Activated CD4-positive, alpha-beta T cell treated with anti-CD3 and anti-CD28 coated beads for 36 hours (primary cell): ENCODE measurements at regions of chr4 and their contacts with region 1.

Region 1: GRCh38 chr4:154551872-154552686 is 1.9 kb upstream of the PLRG1 start:
- DNase-seq: peak; percentile 81
- ATAC-seq: peak; percentile 47
- H3K4me3 Mint-ChIP-seq: no peak overlapping the region
- H3K27ac Mint-ChIP-seq: no peak overlapping the region
- H3K4me1 Mint-ChIP-seq: peaks cover 20% of the 10 kb centered on the region
- H3K27me3 Mint-ChIP-seq: peaks cover 2% of the 10 kb centered on the region

Region 2: GRCh38 chr4:154254999-154255398 is 297.1 kb before region 1 on chr4:
- CTCF ChIA-PET with region 1: no interaction called
- POLR2A ChIA-PET with region 1: no interaction called
- intact Hi-C with region 1: no loop called
- DNase-seq: no peak
- ATAC-seq: no peak
- H3K4me3 Mint-ChIP-seq: no peak overlapping the region
- H3K27ac Mint-ChIP-seq: no peak overlapping the region
- H3K4me1 Mint-ChIP-seq: no peaks in the 10 kb centered on the region
- H3K27me3 Mint-ChIP-seq: peaks cover 18% of the 10 kb centered on the region

Region 3: DNA sequence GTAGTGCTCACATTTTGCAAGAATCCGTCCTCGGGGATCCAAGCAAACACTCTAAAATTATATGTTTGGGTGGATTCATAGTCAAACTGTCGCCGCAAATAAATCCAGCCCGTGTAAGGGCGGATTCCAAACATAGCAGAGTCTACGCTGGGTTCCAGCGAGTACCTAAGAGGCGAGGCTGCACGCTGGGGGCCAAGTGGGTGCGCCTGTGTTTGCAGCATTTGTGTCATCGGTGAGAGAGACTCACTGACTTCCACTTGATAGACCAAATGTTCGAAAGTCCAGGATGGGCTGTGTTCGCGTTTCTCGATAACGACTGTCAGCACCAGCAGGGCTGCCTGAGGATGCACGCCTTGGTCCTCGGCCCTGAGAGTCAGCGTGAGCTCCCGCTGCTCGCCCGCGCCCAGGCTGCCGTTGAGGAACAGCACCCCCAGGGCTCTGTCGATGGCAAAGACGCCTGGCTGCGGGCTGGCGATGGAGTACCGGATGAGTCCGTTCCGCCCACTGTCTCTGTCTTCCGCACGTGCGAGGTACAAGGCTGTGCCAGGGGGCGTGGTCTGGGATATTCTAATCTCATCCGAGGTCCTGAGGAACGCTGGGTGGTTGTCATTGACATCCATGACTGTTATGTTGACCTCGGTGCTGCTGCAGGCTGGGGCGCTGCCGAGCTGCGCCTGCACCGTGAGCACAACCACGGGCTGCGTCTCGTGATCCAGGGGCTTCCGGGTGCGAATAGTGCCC is 219.2 kb before region 1 on chr4:
- CTCF ChIA-PET with region 1: interaction called, 3 read pairs
- POLR2A ChIA-PET with region 1: no interaction called
- intact Hi-C with region 1: loop called in 1 of 2 experiments (anchors 1 kb)
- DNase-seq: peak; percentile 82
- ATAC-seq: peak; percentile 95
- H3K4me3 Mint-ChIP-seq: peak overlapping the region; percentile 68
- H3K27ac Mint-ChIP-seq: peak overlapping the region; percentile 61
- H3K4me1 Mint-ChIP-seq: peaks cover 11% of the 10 kb centered on the region
- H3K27me3 Mint-ChIP-seq: peaks cover 19% of the 10 kb centered on the region

Region 4: DNA sequence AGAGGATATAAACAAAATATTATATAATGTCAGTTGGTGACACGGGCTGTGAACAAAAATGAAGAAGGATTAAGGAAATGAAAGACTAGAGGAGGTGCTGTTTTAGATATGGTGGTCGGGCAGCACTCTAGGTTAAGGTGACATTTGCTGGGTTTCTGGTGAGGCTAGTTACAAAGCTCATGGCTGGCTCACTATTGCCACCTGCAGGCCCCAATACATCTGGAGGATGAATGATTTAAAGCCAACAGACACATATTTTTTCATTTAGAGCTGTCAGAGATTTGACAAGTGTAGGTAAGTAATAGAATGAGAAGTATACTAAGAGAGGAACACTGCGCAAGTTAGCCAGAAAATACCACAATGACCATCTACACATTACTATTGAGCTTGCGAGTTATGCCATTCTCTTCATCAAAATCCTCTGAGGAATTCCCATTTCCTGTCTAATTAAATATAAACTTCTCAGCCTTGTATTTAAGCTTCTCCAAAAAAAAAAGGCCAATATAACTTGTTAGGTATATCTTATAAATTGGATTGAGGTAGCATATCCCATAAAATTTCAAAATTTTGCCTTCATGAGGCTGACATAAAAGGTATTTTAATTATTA is 66.7 kb after region 1 on chr4:
- CTCF ChIA-PET with region 1: interaction called, 67 read pairs
- POLR2A ChIA-PET with region 1: no interaction called
- intact Hi-C with region 1: loop called (anchors 1 kb)
- DNase-seq: peak; percentile 78
- ATAC-seq: peak; percentile 79
- H3K4me3 Mint-ChIP-seq: no peak overlapping the region
- H3K27ac Mint-ChIP-seq: no peak overlapping the region
- H3K4me1 Mint-ChIP-seq: peaks cover 5% of the 10 kb centered on the region
- H3K27me3 Mint-ChIP-seq: peaks cover 6% of the 10 kb centered on the region

Region 5: GRCh38 chr4:154743683-154744340 is 191.7 kb after region 1 on chr4 and contains the start of gene LRAT:
- CTCF ChIA-PET with region 1: no interaction called
- POLR2A ChIA-PET with region 1: no interaction called
- intact Hi-C with region 1: loop called in 1 of 2 experiments (anchors 10 kb)
- DNase-seq: peak; percentile 67
- ATAC-seq: peak; percentile 87
- H3K4me3 Mint-ChIP-seq: peak within 1 kb of the TSS; percentile 64
- H3K27ac Mint-ChIP-seq: no peak within 1 kb of the TSS
- H3K4me1 Mint-ChIP-seq: peaks cover 16% of the 10 kb centered on the region
- H3K27me3 Mint-ChIP-seq: peaks cover 59% of the 10 kb centered on the region
- total RNA-seq, gene LRAT: not detected

Region 6: DNA sequence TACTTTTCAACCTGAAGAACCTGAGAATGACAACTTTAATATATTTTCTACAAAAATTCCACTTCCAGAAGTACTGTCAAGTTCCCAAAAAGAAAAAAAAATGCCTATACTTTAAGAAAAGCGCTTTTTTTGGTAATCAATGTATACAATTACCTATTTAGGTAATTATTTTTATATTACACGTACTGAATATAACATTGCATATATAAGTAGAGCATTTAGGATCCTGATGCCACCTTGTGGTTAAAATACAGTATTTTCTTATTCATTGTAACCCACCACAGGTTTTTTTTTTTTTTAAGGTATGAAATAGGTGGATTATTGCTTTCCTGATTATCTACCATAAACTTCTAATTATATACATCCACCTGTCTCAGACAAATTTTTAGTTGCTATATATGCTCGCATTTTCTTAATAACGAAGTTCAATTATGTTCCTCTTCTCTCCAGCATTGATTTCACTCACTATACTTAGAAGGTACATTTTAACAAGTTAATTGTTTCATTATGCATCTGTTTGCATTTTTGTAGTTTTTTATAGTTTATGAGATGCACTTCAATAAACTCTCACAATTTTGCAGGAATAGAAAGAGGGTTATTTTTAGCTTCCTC is 819.5 kb after region 1 on chr4:
- CTCF ChIA-PET with region 1: interaction called, 3 read pairs
- POLR2A ChIA-PET with region 1: no interaction called
- intact Hi-C with region 1: loop called (anchors 1 kb)
- DNase-seq: no peak
- ATAC-seq: no peak
- H3K4me3 Mint-ChIP-seq: no peak overlapping the region
- H3K27ac Mint-ChIP-seq: no peak overlapping the region
- H3K4me1 Mint-ChIP-seq: peaks cover 11% of the 10 kb centered on the region
- H3K27me3 Mint-ChIP-seq: no peaks in the 10 kb centered on the region

Region 7: DNA sequence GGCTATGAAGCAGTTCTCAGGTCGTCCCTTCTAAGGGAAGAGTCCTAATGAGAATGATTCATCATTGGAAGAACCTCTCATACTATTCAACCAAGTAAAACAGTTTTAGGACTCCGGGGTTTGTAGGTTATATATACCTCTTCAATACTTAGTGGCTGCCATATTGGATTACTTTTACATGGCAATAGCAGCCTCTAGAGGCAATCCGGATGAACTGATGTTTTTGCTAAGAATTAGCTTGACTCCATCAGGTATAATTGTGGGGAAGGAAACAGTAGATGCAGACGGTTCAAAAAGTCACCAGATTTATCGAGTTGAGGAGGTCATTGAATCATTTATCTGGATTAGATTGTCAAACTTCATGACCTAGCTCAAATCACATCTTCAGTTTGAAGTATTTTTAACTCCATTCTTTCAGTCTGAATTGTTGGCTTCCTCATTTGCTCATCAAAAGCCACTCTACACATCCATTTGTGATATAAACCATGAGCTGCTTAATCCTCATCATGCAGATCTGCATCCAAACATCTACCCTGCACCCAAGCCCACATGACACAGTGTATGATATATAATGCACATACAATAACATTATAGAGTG is 1235.1 kb after region 1 on chr4:
- CTCF ChIA-PET with region 1: no interaction called
- POLR2A ChIA-PET with region 1: no interaction called
- intact Hi-C with region 1: loop called in 1 of 2 experiments (anchors 5 kb)
- DNase-seq: peak; percentile 10
- ATAC-seq: peak; percentile 82
- H3K4me3 Mint-ChIP-seq: no peak overlapping the region
- H3K27ac Mint-ChIP-seq: no peak overlapping the region
- H3K4me1 Mint-ChIP-seq: no peaks in the 10 kb centered on the region
- H3K27me3 Mint-ChIP-seq: peaks cover 9% of the 10 kb centered on the region